Adrenal gland (tissue), 19 donors: ENCODE measurements at regions of chr1 and their contacts with region 1.

Region 1: DNA sequence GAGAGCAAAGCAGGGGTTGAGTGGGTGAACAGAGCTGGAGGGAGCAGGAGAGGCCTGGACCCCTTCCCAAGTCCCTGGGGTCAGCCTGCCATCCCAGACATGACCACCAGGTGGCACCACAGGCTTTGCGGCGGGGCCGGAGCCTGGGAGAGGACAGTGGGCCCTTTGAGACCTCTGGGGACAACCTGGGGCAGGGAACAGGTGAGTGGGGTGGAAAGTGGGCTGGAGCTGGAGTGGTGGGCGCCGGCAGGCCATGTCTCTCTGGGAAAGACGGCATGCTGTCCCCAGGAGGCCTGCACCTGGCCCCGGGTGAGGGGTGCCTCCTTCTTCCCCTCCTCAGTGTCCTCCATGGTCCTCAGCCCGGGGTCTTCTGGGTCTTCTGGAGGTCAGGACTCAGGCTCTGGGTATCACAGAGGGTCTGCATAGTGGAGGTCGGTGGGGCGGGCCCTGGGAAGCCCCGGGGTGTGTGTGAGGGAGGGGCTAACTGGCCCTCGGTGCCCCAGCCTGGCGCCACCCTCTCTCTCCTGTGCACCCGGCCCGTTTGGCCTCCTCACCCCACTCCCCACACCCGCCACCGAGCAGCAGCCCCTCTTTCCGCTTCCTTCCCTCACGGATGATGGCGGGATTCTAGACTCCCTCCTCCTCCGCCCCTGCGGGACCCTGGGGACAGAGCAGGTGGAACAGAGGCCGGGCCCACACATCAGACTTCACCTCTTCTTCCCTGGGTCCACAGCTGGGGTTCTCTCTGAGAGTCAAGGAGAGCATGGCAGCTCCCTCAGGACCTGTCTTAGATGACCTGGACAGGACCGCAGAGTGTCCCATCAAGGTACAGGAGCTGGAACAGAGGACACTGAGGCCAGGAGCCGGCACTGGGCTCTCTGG is 28.4 kb upstream of the PKP1 start:
- DNase-seq: peak; percentile 33 to 77 (median 58)
- H3K4me3 ChIP-seq: no peak overlapping the region
- H3K27ac ChIP-seq: no peak overlapping the region
- H3K4me1 ChIP-seq: no peaks in the 10 kb centered on the region
- H3K27me3 ChIP-seq: peaks cover 6% of the 10 kb centered on the region
- CTCF ChIP-seq: peak; percentile 90 to 98 (median 96)
- POLR2A ChIP-seq: no peak

Region 2: GRCh38 chr1:201299968-201300367 is 45.1 kb after region 1 on chr1:
- intact Hi-C with region 1: no loop called
- DNase-seq: peak; percentile 48 to 72 (median 70)
- H3K4me3 ChIP-seq: no peak overlapping the region
- H3K27ac ChIP-seq: no peak overlapping the region
- H3K4me1 ChIP-seq: no peaks in the 10 kb centered on the region
- H3K27me3 ChIP-seq: peaks cover 5% of the 10 kb centered on the region
- CTCF ChIP-seq: no peak
- POLR2A ChIP-seq: no peak

Region 3: DNA sequence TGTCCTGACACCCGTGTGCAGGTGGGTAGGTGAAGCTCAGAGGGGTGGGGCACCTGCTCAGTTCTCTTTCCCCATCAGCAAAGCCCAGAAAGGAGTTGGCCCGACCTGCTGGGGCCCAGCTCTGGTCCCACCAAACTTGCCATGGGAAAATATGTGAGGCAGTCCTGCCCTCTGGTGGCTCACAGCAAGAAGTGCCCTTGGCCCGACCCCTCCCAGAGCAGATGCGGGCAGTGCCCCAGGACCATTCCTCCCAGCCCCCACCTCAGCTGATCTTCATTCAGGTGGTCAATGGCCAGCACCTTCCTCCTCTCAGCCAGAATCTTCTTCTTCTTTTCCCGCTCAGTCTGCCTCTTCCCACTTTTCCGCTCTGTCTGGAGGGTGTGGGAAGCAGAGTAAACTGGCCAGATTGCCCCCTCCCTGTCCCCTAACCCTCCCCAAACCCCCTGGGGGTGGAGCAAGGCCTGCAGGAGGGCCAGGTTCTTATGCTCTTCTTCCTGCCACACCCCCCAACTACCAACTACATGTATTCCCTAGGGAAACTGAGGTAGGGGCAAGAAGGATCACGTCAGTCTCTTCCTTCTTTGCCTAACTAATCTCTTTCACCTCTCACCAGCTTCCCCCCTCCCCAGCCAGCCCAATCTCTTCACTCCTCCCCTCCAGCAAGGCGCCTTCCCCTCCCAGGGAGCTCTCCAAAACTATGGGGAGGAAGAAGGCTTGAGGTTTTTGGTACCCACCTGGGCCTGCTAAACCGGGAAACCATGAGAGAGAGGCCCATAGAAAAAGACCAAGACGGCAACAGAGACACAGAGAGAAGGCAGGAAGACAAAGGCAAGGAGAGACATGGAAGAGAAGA is 107.0 kb after region 1 on chr1:
- intact Hi-C with region 1: loop called (anchors 2 to 5 kb)
- DNase-seq: peak; percentile 21 to 55 (median 39)
- H3K4me3 ChIP-seq: no peak overlapping the region
- H3K27ac ChIP-seq: no peak overlapping the region
- H3K4me1 ChIP-seq: no peaks in the 10 kb centered on the region
- H3K27me3 ChIP-seq: no peaks in the 10 kb centered on the region
- CTCF ChIP-seq: peak; percentile 66 to 80 (median 74)
- POLR2A ChIP-seq: no peak

Region 4: DNA sequence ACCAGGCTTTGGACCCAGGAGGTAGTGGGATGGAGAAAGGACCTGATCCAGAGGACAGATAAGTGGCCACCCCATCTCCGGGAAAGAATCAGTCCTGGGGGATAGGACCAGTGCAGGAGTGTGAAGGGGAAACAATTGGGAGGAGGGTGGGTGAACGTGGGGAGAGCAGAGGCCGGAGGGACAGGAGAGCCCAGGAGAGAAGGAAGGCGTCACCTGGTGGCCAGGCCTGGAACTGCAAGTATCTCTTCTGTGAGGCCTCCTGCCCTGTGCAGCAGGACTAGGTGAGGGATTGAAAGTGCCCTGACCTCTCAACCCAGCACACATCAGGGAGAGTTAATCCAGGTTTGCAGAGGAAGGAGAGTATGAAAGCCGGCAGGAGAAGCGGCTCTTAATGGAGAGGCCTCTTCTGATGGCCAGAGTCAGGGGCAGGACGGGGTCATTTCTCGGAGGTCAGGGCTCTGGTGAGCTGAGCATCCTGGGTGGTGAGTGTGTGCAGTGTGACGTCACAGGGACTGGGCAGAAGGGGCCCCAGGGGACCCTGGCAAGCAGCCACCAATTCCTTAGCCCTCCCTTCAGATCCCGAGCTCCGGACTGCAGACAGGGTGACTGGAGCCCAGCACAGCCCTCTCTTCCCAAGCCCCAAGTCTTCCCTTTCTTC is 153.4 kb after region 1 on chr1:
- intact Hi-C with region 1: loop called in 1 of 2 experiments (anchors 5 kb)
- DNase-seq: peak; percentile 70 to 92 (median 84)
- H3K4me3 ChIP-seq: no peak overlapping the region
- H3K27ac ChIP-seq: no peak overlapping the region
- H3K4me1 ChIP-seq: no peaks in the 10 kb centered on the region
- H3K27me3 ChIP-seq: peaks cover 11% of the 10 kb centered on the region
- CTCF ChIP-seq: peak; percentile 82 to 92 (median 87)
- POLR2A ChIP-seq: no peak